Endothelial cell of umbilical vein (primary cell): ENCODE measurements at regions of chr6 and their contacts with region 1.

Region 1: GRCh38 chr6:155327326-155328073 is 13.2 kb upstream of the TFB1M start:
- DNase-seq: peak; percentile 84
- H3K4me3 ChIP-seq: no peak overlapping the region
- H3K27ac ChIP-seq: peak overlapping the region; percentile 7
- H3K4me1 ChIP-seq: peaks cover 9% of the 10 kb centered on the region
- H3K27me3 ChIP-seq: no peaks in the 10 kb centered on the region
- CTCF ChIP-seq: peak; percentile 50 to 58
- POLR2A ChIP-seq: no peak

Region 2: GRCh38 chr6:155493694-155494143 is 166.2 kb after region 1 on chr6:
- CTCF ChIA-PET with region 1: interaction called, 17 read pairs
- POLR2A ChIA-PET with region 1: no interaction called
- dilution Hi-C with region 1: no loop called
- intact Hi-C with region 1: loop called (anchors 1 kb)
- DNase-seq: peak; percentile 96
- H3K4me3 ChIP-seq: peak overlapping the region in 1 of 3 experiments; percentile 6
- H3K27ac ChIP-seq: peak overlapping the region; percentile 96
- H3K4me1 ChIP-seq: peaks cover 26% of the 10 kb centered on the region
- H3K27me3 ChIP-seq: no peaks in the 10 kb centered on the region
- CTCF ChIP-seq: no peak
- POLR2A ChIP-seq: peak; percentile 64

Region 3: GRCh38 chr6:155765275-155766194 is 438.0 kb after region 1 on chr6:
- CTCF ChIA-PET with region 1: interaction called, 5 read pairs
- POLR2A ChIA-PET with region 1: no interaction called
- dilution Hi-C with region 1: no loop called
- intact Hi-C with region 1: loop called (anchors 5 kb)
- DNase-seq: peak; percentile 71
- H3K4me3 ChIP-seq: no peak overlapping the region
- H3K27ac ChIP-seq: peak overlapping the region; percentile 54
- H3K4me1 ChIP-seq: peaks cover 19% of the 10 kb centered on the region
- H3K27me3 ChIP-seq: no peaks in the 10 kb centered on the region
- CTCF ChIP-seq: no peak
- POLR2A ChIP-seq: no peak

Region 4: GRCh38 chr6:156348424-156348823 is 1020.9 kb after region 1 on chr6:
- CTCF ChIA-PET with region 1: interaction called, 3 read pairs
- POLR2A ChIA-PET with region 1: no interaction called
- dilution Hi-C with region 1: no loop called
- intact Hi-C with region 1: loop called (anchors 2 kb)
- DNase-seq: peak; percentile 86
- H3K4me3 ChIP-seq: peak overlapping the region in 1 of 3 experiments; percentile 20
- H3K27ac ChIP-seq: peak overlapping the region; percentile 46
- H3K4me1 ChIP-seq: peaks cover 23% of the 10 kb centered on the region
- H3K27me3 ChIP-seq: no peaks in the 10 kb centered on the region
- CTCF ChIP-seq: no peak
- POLR2A ChIP-seq: no peak

Region 5: DNA sequence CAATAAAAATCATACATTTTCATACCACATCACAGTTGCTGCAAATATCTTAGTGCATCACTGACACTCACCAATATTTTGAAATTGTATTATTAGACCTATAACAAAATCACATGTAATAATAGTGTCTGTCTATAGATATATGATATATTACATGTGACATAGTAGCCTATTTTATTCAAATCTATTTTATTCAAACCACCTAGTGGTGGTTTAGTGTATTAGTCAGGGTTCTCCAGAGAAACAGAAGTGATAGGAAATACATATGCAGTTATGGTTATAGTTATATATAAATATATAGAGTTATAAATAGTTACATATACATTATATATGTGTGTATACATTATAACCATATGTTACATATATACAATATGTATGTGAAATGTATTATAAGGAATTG is 1083.1 kb after region 1 on chr6:
- CTCF ChIA-PET with region 1: no interaction called
- POLR2A ChIA-PET with region 1: no interaction called
- dilution Hi-C with region 1: no loop called
- intact Hi-C with region 1: loop called (anchors 10 kb)
- DNase-seq: peak; percentile 4
- H3K4me3 ChIP-seq: no peak overlapping the region
- H3K27ac ChIP-seq: no peak overlapping the region
- H3K4me1 ChIP-seq: no peaks in the 10 kb centered on the region
- H3K27me3 ChIP-seq: no peaks in the 10 kb centered on the region
- CTCF ChIP-seq: no peak
- POLR2A ChIP-seq: no peak